CD4-positive, alpha-beta memory T cell (primary cell): ENCODE measurements at regions of chr1 and their contacts with region 1.

Region 1: GRCh38 chr1:150093805-150094204 is 26.2 kb downstream of the VPS45 start:
- DNase-seq: no peak
- H3K4me3 ChIP-seq: no peak overlapping the region
- H3K4me3 Mint-ChIP-seq: no peak overlapping the region
- H3K27ac ChIP-seq: no peak overlapping the region
- H3K27ac Mint-ChIP-seq: peak overlapping the region in 2 of 7 donors; percentile 2 to 42
- H3K4me1 ChIP-seq: peaks cover 46% of the 10 kb centered on the region
- H3K4me1 Mint-ChIP-seq: peaks cover 22 to 36% (median 25%) of the 10 kb centered on the region in 4 donors
- H3K27me3 ChIP-seq: no peaks in the 10 kb centered on the region
- H3K27me3 Mint-ChIP-seq: no peaks in the 10 kb centered on the region

Region 2: DNA sequence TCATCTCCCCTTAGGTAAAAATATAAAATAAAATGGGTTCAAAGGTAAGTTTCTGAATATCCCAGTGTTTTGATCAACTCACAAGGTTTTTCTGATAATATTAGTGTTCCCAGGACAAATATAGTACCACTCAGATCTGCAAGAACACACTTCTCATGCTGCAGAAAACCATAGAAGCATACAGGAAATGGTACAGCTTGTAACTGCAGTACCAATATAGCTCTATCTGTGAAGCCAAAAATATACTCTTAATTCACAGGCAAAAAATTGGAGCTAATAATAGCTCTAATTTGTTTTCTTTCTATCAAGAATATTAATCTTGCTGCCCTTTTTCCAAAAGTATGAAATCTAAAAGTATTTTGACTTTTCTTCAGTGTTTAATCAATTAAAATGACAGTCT is 13.0 kb before region 1 on chr1:
- CTCF ChIA-PET with region 1: interaction called, 3 read pairs
- POLR2A ChIA-PET with region 1: interaction called, 4 read pairs
- intact Hi-C with region 1: loop called (anchors 2 kb)
- DNase-seq: no peak
- H3K4me3 ChIP-seq: no peak overlapping the region
- H3K4me3 Mint-ChIP-seq: no peak overlapping the region
- H3K27ac ChIP-seq: no peak overlapping the region
- H3K27ac Mint-ChIP-seq: peak overlapping the region in 1 of 7 donors; percentile 57
- H3K4me1 ChIP-seq: peaks cover 6% of the 10 kb centered on the region
- H3K4me1 Mint-ChIP-seq: peaks cover 10 to 12% (median 11%) of the 10 kb centered on the region in 4 donors
- H3K27me3 ChIP-seq: no peaks in the 10 kb centered on the region
- H3K27me3 Mint-ChIP-seq: no peaks in the 10 kb centered on the region